CD8-positive, alpha-beta T cell (primary cell): ENCODE measurements at regions of chr1 and their contacts with region 1.

Region 1: GRCh38 chr1:77627978-77628570 is 54.4 kb downstream of the ZZZ3 start:
- DNase-seq: no peak
- ATAC-seq: no peak
- H3K4me3 ChIP-seq: no peak overlapping the region
- H3K4me3 Mint-ChIP-seq: no peak overlapping the region
- H3K27ac ChIP-seq: no peak overlapping the region
- H3K27ac Mint-ChIP-seq: no peak overlapping the region
- H3K4me1 ChIP-seq: no peaks in the 10 kb centered on the region
- H3K4me1 Mint-ChIP-seq: peaks cover 9% of the 10 kb centered on the region
- H3K27me3 ChIP-seq: no peaks in the 10 kb centered on the region
- H3K27me3 Mint-ChIP-seq: no peaks in the 10 kb centered on the region
- CTCF ChIP-seq: no peak

Region 2: DNA sequence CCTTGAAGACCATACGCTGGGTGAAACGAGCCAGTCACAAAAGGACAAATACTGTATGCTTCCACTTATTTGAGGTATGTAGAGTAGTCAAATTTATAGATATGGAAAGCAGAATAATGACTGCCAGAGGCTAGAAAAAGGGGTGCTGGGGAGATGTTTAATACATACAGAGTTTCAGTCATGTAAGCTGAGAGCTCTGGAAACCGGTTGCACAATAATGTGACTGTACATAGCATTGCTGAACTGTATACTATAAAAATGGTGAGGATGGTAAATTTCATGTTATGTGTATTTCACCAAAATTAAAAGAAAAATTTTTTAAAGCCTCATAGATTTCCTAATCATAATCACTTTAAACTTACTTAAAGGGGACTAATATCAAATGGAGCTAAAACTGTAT is 56.4 kb before region 1 on chr1:
- CTCF ChIA-PET with region 1: no interaction called
- POLR2A ChIA-PET with region 1: no interaction called
- intact Hi-C with region 1: no loop called
- DNase-seq: no peak
- ATAC-seq: no peak
- H3K4me3 ChIP-seq: no peak overlapping the region
- H3K4me3 Mint-ChIP-seq: no peak overlapping the region
- H3K27ac ChIP-seq: no peak overlapping the region
- H3K27ac Mint-ChIP-seq: no peak overlapping the region
- H3K4me1 ChIP-seq: no peaks in the 10 kb centered on the region
- H3K4me1 Mint-ChIP-seq: no peaks in the 10 kb centered on the region
- H3K27me3 ChIP-seq: no peaks in the 10 kb centered on the region
- H3K27me3 Mint-ChIP-seq: no peaks in the 10 kb centered on the region
- CTCF ChIP-seq: no peak

Region 3: GRCh38 chr1:77652268-77652667 is 24.2 kb after region 1 on chr1:
- CTCF ChIA-PET with region 1: no interaction called
- POLR2A ChIA-PET with region 1: no interaction called
- intact Hi-C with region 1: loop called in 1 of 2 experiments (anchors 2 kb)
- DNase-seq: no peak
- ATAC-seq: no peak
- H3K4me3 ChIP-seq: no peak overlapping the region
- H3K4me3 Mint-ChIP-seq: no peak overlapping the region
- H3K27ac ChIP-seq: no peak overlapping the region
- H3K27ac Mint-ChIP-seq: peak overlapping the region; percentile 58
- H3K4me1 ChIP-seq: no peaks in the 10 kb centered on the region
- H3K4me1 Mint-ChIP-seq: peaks cover 29% of the 10 kb centered on the region
- H3K27me3 ChIP-seq: no peaks in the 10 kb centered on the region
- H3K27me3 Mint-ChIP-seq: no peaks in the 10 kb centered on the region
- CTCF ChIP-seq: no peak

Region 4: GRCh38 chr1:78237364-78237916 is 609.4 kb after region 1 on chr1:
- CTCF ChIA-PET with region 1: no interaction called
- POLR2A ChIA-PET with region 1: no interaction called
- intact Hi-C with region 1: no loop called
- DNase-seq: no peak
- ATAC-seq: no peak
- H3K4me3 ChIP-seq: no peak overlapping the region
- H3K4me3 Mint-ChIP-seq: no peak overlapping the region
- H3K27ac ChIP-seq: no peak overlapping the region
- H3K27ac Mint-ChIP-seq: no peak overlapping the region
- H3K4me1 ChIP-seq: no peaks in the 10 kb centered on the region
- H3K4me1 Mint-ChIP-seq: no peaks in the 10 kb centered on the region
- H3K27me3 ChIP-seq: no peaks in the 10 kb centered on the region
- H3K27me3 Mint-ChIP-seq: peaks cover 3% of the 10 kb centered on the region
- CTCF ChIP-seq: no peak